AG04450 (cell line): ENCODE measurements at regions of chr11 and their contacts with region 1.

Region 1: GRCh38 chr11:819129-819931 is 616 bp downstream of the PNPLA2 start:
- DNase-seq: peak; percentile 48
- H3K4me3 ChIP-seq: peak overlapping the region; percentile 78
- H3K27ac ChIP-seq: peak overlapping the region; percentile 11
- H3K27me3 ChIP-seq: no peaks in the 10 kb centered on the region
- CTCF ChIP-seq: peak; percentile 10; the same call in 1 of the 2 replicates

Region 2: GRCh38 chr11:832321-833113 is 13.2 kb after region 1 on chr11 and contains the start of gene CD151:
- CTCF ChIA-PET with region 1: no interaction called
- POLR2A ChIA-PET with region 1: interaction called, 28 read pairs
- DNase-seq: no peak
- H3K4me3 ChIP-seq: peak within 1 kb of the TSS; percentile 77
- H3K27ac ChIP-seq: peak within 1 kb of the TSS; percentile 57
- H3K27me3 ChIP-seq: no peaks in the 10 kb centered on the region
- CTCF ChIP-seq: no peak
- polyA plus RNA-seq, gene CD151: 559 and 909 TPM in 2 replicates

Region 3: DNA sequence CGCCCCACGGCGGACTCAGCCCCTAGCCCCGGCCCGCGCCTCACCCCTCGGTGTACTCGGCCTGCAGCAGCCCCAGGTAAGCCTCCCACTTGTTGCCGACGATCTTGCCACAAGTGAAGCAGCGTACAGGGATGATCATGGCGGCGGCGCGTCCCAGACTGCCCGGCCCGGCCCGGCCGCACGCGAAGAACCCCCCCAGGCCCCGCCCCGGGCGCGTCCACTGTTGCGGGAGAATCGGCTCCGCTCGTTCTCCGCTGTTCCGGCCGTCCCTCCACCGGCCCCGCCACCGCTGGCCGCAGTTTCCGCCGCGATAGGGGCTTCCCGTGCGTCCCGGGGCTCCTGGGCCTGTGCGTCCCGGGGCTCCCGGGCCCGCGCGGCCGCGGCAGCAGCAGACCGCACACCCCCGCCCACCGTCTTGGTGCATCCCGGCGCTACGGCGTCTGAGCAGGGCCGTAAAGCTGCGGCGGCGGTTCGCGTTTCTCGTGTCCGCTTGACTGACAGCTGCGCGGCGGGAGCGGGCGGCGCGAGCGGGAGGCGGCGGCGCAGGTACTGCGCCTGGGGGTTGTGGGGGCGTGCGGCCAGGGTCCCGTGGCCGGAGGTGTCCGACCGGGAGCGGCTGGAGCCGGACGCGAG is 23.2 kb after region 1 on chr11 and contains the starts of genes POLR2L and TSPAN4:
- CTCF ChIA-PET with region 1: no interaction called
- POLR2A ChIA-PET with region 1: interaction called, 19 read pairs
- DNase-seq: peak; percentile 68
- H3K4me3 ChIP-seq: peak within 1 kb of the TSS; percentile 71
- H3K27ac ChIP-seq: peak within 1 kb of the TSS; percentile 97
- H3K27me3 ChIP-seq: no peaks in the 10 kb centered on the region
- CTCF ChIP-seq: no peak
- polyA plus RNA-seq, gene POLR2L: 211 and 431 TPM in 2 replicates
- polyA plus RNA-seq, gene TSPAN4: 92.6 and 134 TPM in 2 replicates